Activated naive CD4-positive, alpha-beta T cell treated with anti-CD3 and anti-CD28 coated beads for 36 hours (primary cell): ENCODE measurements at regions of chr9 and their contacts with region 1.

Region 1: DNA sequence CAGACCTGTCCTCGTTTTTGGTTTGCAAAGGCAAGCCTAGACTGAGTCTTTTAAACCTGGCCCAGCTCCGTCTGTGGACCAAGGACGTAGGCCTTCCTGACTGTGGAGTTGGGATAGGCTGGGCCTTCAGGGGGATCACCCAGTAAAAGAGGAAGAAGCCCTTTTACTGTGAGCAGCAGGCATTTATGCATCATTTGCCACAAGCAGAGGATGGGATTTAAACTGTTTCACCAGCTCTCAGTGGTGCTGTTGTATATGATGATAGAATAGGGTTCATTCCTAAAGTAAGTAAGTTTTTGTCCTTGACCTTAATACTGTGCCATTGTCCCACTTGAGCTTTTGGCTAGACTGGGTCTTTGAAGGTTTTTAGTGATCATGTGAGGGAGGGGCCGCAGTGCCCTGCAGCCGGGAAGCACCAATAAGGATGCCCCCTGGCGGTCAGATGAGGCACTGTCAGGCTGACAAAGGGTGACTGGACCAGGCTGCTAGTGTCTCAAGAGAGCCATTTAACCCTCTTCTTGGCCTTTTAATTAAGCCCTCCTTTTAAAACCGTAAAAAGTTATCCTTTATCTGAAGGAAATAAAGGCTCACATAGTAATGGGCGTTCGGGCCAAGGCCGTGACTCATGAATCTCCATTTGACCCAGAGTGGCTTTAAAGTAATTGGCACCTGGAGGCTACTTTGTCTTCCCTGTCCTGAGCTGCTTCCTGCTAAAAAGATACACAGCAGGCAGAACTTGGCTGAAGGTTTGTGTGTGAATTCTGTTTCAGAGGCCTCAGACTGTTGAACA is 74.0 kb downstream of the UBAP1 start:
- DNase-seq: peak; percentile 80
- H3K4me3 Mint-ChIP-seq: no peak overlapping the region
- H3K27ac Mint-ChIP-seq: peak overlapping the region; percentile 36
- H3K4me1 Mint-ChIP-seq: peaks cover 16% of the 10 kb centered on the region
- H3K27me3 Mint-ChIP-seq: no peaks in the 10 kb centered on the region

Region 2: GRCh38 chr9:34072868-34073590 is 179.8 kb before region 1 on chr9:
- CTCF ChIA-PET with region 1: interaction called, 10 read pairs
- intact Hi-C with region 1: loop called (anchors 1 kb)
- DNase-seq: no peak
- H3K4me3 Mint-ChIP-seq: no peak overlapping the region
- H3K27ac Mint-ChIP-seq: no peak overlapping the region
- H3K4me1 Mint-ChIP-seq: no peaks in the 10 kb centered on the region
- H3K27me3 Mint-ChIP-seq: no peaks in the 10 kb centered on the region

Region 3: DNA sequence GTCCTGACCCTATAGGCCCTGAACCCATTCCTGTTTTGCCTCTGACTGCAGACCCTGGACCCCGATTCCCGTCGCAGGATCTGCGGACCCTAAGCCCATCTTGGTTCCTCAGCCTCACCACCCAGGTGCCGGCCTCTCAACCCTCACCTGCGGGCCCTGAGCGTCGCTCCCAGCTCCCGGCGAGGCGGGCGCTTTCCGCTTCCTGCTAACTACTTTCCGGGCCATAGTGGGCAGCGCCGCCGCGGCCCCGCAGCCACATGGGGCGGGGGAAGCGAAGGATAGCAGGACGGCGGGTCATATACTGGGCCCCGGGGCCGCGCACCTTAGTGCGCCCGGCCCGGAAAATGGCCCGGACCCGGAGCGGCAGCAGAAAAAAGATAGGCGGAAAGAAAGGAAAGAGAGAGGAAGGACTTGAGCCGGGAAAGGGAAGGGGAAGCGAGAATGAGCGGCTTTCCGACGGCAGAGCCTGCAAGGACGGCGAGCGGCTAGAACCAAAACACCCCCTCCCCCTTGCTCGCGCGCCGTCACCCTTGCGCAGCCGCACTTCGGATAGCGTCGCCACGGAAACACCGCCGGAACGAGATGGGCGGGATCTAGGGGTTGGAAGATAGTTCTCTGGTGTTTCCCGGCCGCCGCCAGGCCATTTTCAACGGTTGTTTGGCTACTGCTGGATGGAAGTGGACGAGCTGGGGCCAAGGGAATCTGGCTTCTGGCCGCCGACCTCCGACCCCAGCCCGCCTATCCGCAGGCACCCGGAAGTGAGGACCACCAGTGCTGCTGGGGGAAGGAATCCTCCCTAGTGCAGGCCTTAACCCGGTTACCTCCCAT is 126.4 kb before region 1 on chr9 and contains the start of gene DCAF12:
- CTCF ChIA-PET with region 1: interaction called, 15 read pairs
- intact Hi-C with region 1: loop called (anchors 1 kb)
- DNase-seq: peak; percentile 94
- H3K4me3 Mint-ChIP-seq: peak within 1 kb of the TSS; percentile 93
- H3K27ac Mint-ChIP-seq: peak within 1 kb of the TSS; percentile 93
- H3K4me1 Mint-ChIP-seq: peaks cover 35% of the 10 kb centered on the region
- H3K27me3 Mint-ChIP-seq: no peaks in the 10 kb centered on the region
- total RNA-seq, gene DCAF12: 34.0 to 37.0 TPM

Region 4: GRCh38 chr9:34178520-34179212 is 74.2 kb before region 1 on chr9 and contains the start of gene UBAP1:
- CTCF ChIA-PET with region 1: interaction called, 4 read pairs
- intact Hi-C with region 1: loop called (anchors 2 kb)
- DNase-seq: peak; percentile 99
- H3K4me3 Mint-ChIP-seq: peak within 1 kb of the TSS; percentile 84
- H3K27ac Mint-ChIP-seq: peak within 1 kb of the TSS; percentile 94
- H3K4me1 Mint-ChIP-seq: peaks cover 16% of the 10 kb centered on the region
- H3K27me3 Mint-ChIP-seq: no peaks in the 10 kb centered on the region
- total RNA-seq, gene UBAP1: 29.9 to 31.7 TPM

Region 5: GRCh38 chr9:34267660-34268059 is 14.8 kb after region 1 on chr9:
- CTCF ChIA-PET with region 1: interaction called, 10 read pairs
- intact Hi-C with region 1: no loop called
- DNase-seq: no peak
- H3K4me3 Mint-ChIP-seq: no peak overlapping the region
- H3K27ac Mint-ChIP-seq: no peak overlapping the region
- H3K4me1 Mint-ChIP-seq: peaks cover 8% of the 10 kb centered on the region
- H3K27me3 Mint-ChIP-seq: no peaks in the 10 kb centered on the region

Region 6: GRCh38 chr9:34292552-34292951 is 39.7 kb after region 1 on chr9:
- CTCF ChIA-PET with region 1: no interaction called
- intact Hi-C with region 1: no loop called
- DNase-seq: no peak
- H3K4me3 Mint-ChIP-seq: no peak overlapping the region
- H3K27ac Mint-ChIP-seq: no peak overlapping the region
- H3K4me1 Mint-ChIP-seq: no peaks in the 10 kb centered on the region
- H3K27me3 Mint-ChIP-seq: no peaks in the 10 kb centered on the region